ENCODE measurements at regions of chr6 and their contacts with region 1.

Region 1: DNA sequence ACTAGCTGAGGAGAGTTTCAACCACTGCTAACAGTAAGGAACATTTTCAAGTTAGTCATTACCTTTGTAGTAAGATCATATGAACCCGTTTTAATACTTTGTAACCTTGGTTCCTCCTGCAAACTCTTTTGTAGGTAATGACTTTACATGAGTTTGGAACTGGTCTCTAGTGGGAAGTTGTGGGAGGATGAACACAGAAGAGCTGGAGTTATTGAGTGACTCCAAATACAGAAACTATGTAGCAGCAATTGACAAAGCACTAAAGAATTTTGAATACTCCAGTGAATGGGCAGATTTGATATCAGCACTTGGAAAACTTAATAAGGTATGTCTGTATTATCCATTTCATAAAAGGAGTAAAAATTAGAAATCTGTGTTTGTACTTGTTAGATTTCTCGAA is 29.3 kb downstream of the DOP1A start:
- DNase-seq: no peak
- CTCF ChIP-seq: no peak

Region 2: GRCh38 chr6:82924799-82925535 is 171.8 kb before region 1 on chr6:
- CTCF ChIA-PET with region 1: no interaction called
- POLR2A ChIA-PET with region 1: no interaction called
- DNase-seq: no peak
- CTCF ChIP-seq: no peak

Region 3: GRCh38 chr6:83108378-83108777 is 11.6 kb after region 1 on chr6:
- CTCF ChIA-PET with region 1: interaction called, 12 read pairs
- POLR2A ChIA-PET with region 1: no interaction called
- DNase-seq: no peak
- CTCF ChIP-seq: no peak

Measured in GM10248 (cell line).